CD4-positive, alpha-beta T cell (primary cell): ENCODE measurements at regions of chr11 and their contacts with region 1.

Region 1: GRCh38 chr11:66694732-66695207 is 17.1 kb upstream of the RBM4B start:
- DNase-seq: peak; percentile 75 to 91 (median 80)
- ATAC-seq: peak; percentile 94
- H3K4me3 ChIP-seq: no peak overlapping the region
- H3K4me3 Mint-ChIP-seq: no peak overlapping the region
- H3K27ac ChIP-seq: no peak overlapping the region
- H3K27ac Mint-ChIP-seq: no peak overlapping the region
- H3K4me1 ChIP-seq: no peaks in the 10 kb centered on the region
- H3K4me1 Mint-ChIP-seq: no peaks in the 10 kb centered on the region
- H3K27me3 ChIP-seq: no peaks in the 10 kb centered on the region
- H3K27me3 Mint-ChIP-seq: no peaks in the 10 kb centered on the region
- CTCF ChIP-seq: peak; percentile 96

Region 2: DNA sequence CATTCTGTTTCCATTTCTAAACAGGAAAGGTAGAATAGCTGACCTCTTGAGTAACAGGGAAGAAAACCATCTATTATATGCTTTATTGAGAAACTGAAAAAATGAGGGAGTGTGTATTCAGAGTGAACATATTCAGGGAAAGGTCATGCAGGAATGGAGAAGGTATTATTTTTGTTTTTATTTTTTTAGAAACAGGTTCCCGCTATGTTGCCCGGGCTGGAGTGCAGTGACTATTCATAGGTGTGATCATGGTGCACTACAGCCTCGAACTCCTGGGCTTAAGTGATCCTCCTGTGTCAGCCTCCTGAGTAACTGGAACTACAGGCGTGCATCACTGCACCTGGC is 139.7 kb after region 1 on chr11:
- CTCF ChIA-PET with region 1: interaction called, 7 read pairs
- POLR2A ChIA-PET with region 1: no interaction called
- intact Hi-C with region 1: loop called (anchors 1 kb)
- DNase-seq: peak in 1 of 14 experiments; percentile 9
- ATAC-seq: no peak
- H3K4me3 ChIP-seq: no peak overlapping the region
- H3K4me3 Mint-ChIP-seq: no peak overlapping the region
- H3K27ac ChIP-seq: no peak overlapping the region
- H3K27ac Mint-ChIP-seq: peak overlapping the region; percentile 9
- H3K4me1 ChIP-seq: peaks cover 3% of the 10 kb centered on the region
- H3K4me1 Mint-ChIP-seq: peaks cover 11% of the 10 kb centered on the region
- H3K27me3 ChIP-seq: no peaks in the 10 kb centered on the region
- H3K27me3 Mint-ChIP-seq: no peaks in the 10 kb centered on the region
- CTCF ChIP-seq: peak; percentile 59

Region 3: GRCh38 chr11:66868726-66869566 is 174.2 kb after region 1 on chr11:
- CTCF ChIA-PET with region 1: no interaction called
- POLR2A ChIA-PET with region 1: no interaction called
- intact Hi-C with region 1: loop called (anchors 1 kb)
- DNase-seq: peak; percentile 61 to 89 (median 73)
- ATAC-seq: peak; percentile 99
- H3K4me3 ChIP-seq: no peak overlapping the region
- H3K4me3 Mint-ChIP-seq: no peak overlapping the region
- H3K27ac ChIP-seq: no peak overlapping the region
- H3K27ac Mint-ChIP-seq: no peak overlapping the region
- H3K4me1 ChIP-seq: peaks cover 8% of the 10 kb centered on the region
- H3K4me1 Mint-ChIP-seq: peaks cover 11% of the 10 kb centered on the region
- H3K27me3 ChIP-seq: no peaks in the 10 kb centered on the region
- H3K27me3 Mint-ChIP-seq: no peaks in the 10 kb centered on the region
- CTCF ChIP-seq: peak; percentile 81

Region 4: DNA sequence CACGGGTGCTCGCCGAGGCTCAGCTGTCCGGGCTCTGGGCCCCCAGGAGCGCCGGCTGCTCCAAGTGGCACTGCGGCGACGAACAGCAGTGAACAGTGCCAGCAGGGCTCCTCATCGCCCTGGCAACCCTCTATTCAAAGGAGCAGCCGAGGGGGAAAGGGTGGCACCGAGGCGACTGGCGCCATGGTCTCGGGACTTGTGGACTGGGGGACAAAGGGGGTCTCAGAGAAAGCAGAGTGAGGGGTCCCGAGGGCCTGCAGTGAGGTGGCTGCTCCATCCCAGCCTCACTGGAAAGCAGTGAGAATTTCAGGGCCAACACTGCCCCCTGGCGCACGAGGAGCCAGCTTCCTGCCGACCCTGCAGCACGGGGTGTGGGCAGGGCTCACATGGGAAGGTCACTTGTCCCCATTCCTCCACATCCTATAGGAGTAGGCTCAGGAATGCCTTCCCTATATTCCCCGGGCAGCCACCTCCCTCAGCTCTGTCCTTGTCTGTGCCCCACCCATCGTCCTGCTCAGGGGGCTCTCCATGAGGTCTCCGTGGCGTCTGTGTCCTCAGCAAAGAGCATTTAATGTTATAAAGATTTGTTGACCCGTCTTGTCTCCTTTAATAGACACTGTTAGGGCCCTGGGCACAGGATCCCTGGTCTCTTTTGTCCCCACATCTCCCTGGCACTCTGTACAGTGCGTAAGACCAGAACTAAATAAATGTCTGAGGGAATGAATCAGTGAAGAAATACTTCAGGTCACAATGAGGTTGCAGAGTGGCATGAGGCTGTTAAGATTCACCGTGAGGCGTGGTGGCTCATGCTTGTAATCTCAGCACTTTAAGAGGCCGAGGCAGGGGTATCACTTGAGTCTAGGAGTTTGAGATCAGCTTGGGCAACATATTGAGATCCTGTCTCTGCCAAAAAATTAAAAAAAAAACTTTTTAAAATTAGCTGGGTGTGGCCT is 188.5 kb after region 1 on chr11:
- CTCF ChIA-PET with region 1: interaction called, 4 read pairs
- POLR2A ChIA-PET with region 1: no interaction called
- intact Hi-C with region 1: loop called (anchors 1 kb)
- DNase-seq: peak in 13 of 14 experiments; percentile 38 to 71 (median 54)
- ATAC-seq: peak; percentile 54
- H3K4me3 ChIP-seq: no peak overlapping the region
- H3K4me3 Mint-ChIP-seq: no peak overlapping the region
- H3K27ac ChIP-seq: no peak overlapping the region
- H3K27ac Mint-ChIP-seq: no peak overlapping the region
- H3K4me1 ChIP-seq: peaks cover 13% of the 10 kb centered on the region
- H3K4me1 Mint-ChIP-seq: peaks cover 14% of the 10 kb centered on the region
- H3K27me3 ChIP-seq: no peaks in the 10 kb centered on the region
- H3K27me3 Mint-ChIP-seq: no peaks in the 10 kb centered on the region
- CTCF ChIP-seq: peak; percentile 65

Region 5: DNA sequence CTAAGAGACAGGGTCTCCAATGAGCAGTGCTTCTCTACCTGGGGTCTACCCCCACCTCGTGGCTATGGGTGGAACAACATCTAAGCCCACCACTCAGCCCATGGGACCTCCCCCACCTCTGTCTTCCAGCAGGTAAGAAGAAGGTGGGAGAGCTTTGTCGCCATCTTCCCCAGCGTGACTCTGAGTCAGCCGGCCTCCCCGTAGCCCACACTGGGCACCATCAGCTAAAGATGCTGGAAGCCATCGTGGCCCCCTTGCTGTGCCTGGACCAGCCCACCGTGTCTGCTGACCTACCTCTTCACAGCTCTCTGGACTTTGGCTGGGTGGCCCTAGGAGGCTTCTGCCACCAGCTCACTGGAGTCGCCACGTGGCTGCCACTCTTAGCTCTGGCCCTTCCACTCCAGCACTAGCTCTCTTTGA is 281.3 kb after region 1 on chr11:
- CTCF ChIA-PET with region 1: no interaction called
- POLR2A ChIA-PET with region 1: no interaction called
- intact Hi-C with region 1: loop called in 1 of 2 experiments (anchors 5 kb)
- DNase-seq: peak in 4 of 14 experiments; percentile 5 to 41 (median 24)
- ATAC-seq: no peak
- H3K4me3 ChIP-seq: no peak overlapping the region
- H3K4me3 Mint-ChIP-seq: no peak overlapping the region
- H3K27ac ChIP-seq: no peak overlapping the region
- H3K27ac Mint-ChIP-seq: no peak overlapping the region
- H3K4me1 ChIP-seq: no peaks in the 10 kb centered on the region
- H3K4me1 Mint-ChIP-seq: no peaks in the 10 kb centered on the region
- H3K27me3 ChIP-seq: peaks cover 0 to 7% of the 10 kb centered on the region in 2 experiments
- H3K27me3 Mint-ChIP-seq: peaks cover 9% of the 10 kb centered on the region
- CTCF ChIP-seq: peak; percentile 48

Region 6: GRCh38 chr11:67071420-67072284 is 376.9 kb after region 1 on chr11:
- CTCF ChIA-PET with region 1: no interaction called
- POLR2A ChIA-PET with region 1: no interaction called
- intact Hi-C with region 1: loop called (anchors 2 to 5 kb)
- DNase-seq: peak; percentile 50 to 82 (median 66)
- ATAC-seq: peak; percentile 99
- H3K4me3 ChIP-seq: peak overlapping the region; percentile 37
- H3K4me3 Mint-ChIP-seq: no peak overlapping the region
- H3K27ac ChIP-seq: no peak overlapping the region
- H3K27ac Mint-ChIP-seq: no peak overlapping the region
- H3K4me1 ChIP-seq: peaks cover 8% of the 10 kb centered on the region
- H3K4me1 Mint-ChIP-seq: no peaks in the 10 kb centered on the region
- H3K27me3 ChIP-seq: peaks cover 0 to 2% of the 10 kb centered on the region in 2 experiments
- H3K27me3 Mint-ChIP-seq: peaks cover 6% of the 10 kb centered on the region
- CTCF ChIP-seq: peak; percentile 85